Activated CD4-positive, alpha-beta T cell treated with anti-CD3 and anti-CD28 coated beads for 36 hours (primary cell): ENCODE measurements at regions of chr17 and their contacts with region 1.

Region 1: GRCh38 chr17:31931756-31932155 is 5.1 kb upstream of the SUZ12 start:
- DNase-seq: no peak
- ATAC-seq: no peak
- H3K4me3 Mint-ChIP-seq: no peak overlapping the region
- H3K27ac Mint-ChIP-seq: no peak overlapping the region
- H3K4me1 Mint-ChIP-seq: peaks cover 7% of the 10 kb centered on the region
- H3K27me3 Mint-ChIP-seq: no peaks in the 10 kb centered on the region

Region 2: DNA sequence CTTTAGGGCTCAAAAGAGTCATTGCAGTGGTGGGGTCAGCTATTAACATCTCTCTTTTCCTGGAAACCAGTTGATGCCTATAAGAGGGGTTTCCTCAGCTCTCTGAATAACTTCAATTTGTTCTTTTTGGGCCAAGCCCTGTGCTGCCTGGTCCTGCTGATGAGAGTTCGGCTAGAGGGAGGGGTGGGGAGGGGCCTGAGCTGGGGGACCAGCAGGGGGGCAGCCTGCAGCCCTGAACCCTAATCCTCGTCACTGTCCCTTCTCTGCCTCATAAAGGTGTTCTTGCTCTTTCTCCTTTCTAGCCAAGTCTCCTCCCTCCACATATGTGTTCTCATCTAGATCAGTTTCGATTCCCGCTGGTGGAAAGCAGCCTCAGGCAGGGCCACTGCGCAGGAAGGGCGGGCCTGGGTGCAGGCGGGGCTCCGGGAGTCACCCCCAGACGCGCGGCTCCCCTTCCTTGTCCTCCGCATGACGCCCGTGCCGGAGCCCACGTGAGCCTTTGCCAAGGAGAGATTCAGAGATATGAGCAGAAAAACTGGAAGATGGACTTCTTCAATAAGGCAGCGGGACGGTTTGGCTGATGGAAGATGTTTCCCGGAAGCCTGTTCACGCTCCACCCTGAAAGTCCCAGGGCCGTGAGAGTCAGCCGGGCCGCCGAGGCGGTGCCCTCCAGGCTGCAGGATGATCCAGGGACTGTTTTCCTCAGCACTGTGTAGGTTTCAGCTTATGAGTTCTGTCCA is 195.6 kb after region 1 on chr17:
- CTCF ChIA-PET with region 1: no interaction called
- POLR2A ChIA-PET with region 1: no interaction called
- intact Hi-C with region 1: loop called in 1 of 2 experiments (anchors 5 kb)
- DNase-seq: peak; percentile 91
- ATAC-seq: peak; percentile 99
- H3K4me3 Mint-ChIP-seq: peak overlapping the region; percentile 96
- H3K27ac Mint-ChIP-seq: peak overlapping the region; percentile 99
- H3K4me1 Mint-ChIP-seq: peaks cover 15% of the 10 kb centered on the region
- H3K27me3 Mint-ChIP-seq: no peaks in the 10 kb centered on the region